H1 (cell line): ENCODE measurements at regions of chr22 and their contacts with region 1.

Region 1: DNA sequence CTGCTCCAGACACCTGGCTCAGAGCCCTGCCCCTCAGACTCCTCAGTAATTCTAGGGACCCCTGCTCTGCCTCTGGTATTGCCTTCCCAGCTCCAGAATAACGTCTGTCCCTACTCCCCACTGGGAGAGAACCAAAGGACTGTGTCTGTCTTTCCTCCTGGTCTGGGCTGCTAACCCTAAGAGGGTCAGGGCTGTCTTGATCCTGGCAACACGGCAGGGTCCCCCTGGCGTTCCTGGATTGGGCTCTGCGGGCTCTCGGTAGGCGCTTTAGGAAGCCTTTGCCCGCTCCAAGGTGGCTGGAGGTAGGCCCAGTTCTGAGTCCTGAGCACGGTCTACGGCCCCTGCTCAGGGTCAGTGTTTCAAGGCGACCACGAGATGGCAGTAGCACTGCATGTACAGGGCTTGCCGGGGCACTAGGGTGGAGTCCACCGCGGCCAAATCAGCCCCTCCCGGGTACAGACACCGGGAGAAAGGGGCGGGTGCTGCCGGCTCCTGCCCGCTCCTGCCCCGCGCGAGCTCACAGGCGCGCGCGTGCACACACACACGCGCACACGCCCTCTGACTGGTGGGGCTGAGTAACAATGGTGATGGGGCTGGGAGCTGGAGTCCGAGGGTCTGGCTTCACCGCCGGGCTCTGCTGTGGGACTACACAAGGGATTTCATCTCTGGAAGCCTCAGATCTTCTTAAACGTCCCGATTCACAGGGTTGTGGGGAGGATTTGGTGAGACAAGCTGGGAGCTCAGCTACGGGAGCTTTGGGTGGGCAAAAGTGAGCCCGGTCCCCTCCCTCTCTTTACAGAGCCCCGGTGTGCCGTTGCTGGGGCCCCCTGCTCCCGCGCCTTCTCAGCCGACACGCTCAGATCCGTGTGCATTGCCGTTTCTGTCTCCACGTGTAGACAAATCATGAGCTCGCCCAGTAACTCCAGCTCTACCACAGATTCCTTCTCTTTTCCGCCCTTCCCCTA is 30.1 kb upstream of the HMOX1 start:
- DNase-seq: peak; percentile 75 to 94
- H3K4me3 ChIP-seq: peak overlapping the region; percentile 38 to 79 (median 70)
- H3K27ac ChIP-seq: no peak overlapping the region
- H3K4me1 ChIP-seq: peaks cover 0 to 12% (median 5%) of the 10 kb centered on the region in 4 experiments; a peak in 5 of 7 replicates
- H3K27me3 ChIP-seq: peaks cover 0 to 4% (median 0%) of the 10 kb centered on the region in 4 experiments; a peak in 4 of 7 replicates
- CTCF ChIP-seq: peak; percentile 87 to 93 (median 89)
- EP300 ChIP-seq: no peak
- POLR2A ChIP-seq: no peak
- RAD21 ChIP-seq: peak; percentile 97 to 98

Region 2: GRCh38 chr22:34960005-34960404 is 390.8 kb before region 1 on chr22:
- CTCF ChIA-PET with region 1: no interaction called
- POLR2A ChIA-PET with region 1: no interaction called
- DNase-seq: no peak
- H3K4me3 ChIP-seq: no peak overlapping the region
- H3K27ac ChIP-seq: no peak overlapping the region
- H3K4me1 ChIP-seq: no peaks in the 10 kb centered on the region
- H3K27me3 ChIP-seq: no peaks in the 10 kb centered on the region
- CTCF ChIP-seq: no peak
- EP300 ChIP-seq: no peak
- POLR2A ChIP-seq: no peak
- RAD21 ChIP-seq: no peak

Region 3: DNA sequence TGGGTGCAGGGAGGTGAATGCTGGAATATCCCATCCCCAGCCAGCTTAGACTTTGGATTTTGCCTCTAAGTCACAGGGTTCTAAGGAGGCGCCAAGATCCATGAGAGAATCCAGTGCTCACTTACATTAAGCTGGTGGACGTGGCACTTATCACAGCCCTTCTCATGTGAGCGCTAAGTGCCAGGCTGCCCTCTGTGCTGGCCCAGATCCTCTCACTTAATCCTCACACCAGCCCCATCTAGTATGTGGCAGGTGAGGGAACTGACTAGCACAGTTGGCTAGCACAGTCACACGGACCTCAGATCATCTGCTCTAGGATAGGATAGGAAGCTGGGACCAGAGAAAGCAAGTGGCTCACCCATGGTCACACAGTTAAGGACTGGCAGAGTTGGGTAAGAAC is 33.7 kb after region 1 on chr22:
- CTCF ChIA-PET with region 1: interaction called, 39 read pairs
- POLR2A ChIA-PET with region 1: interaction called, 4 read pairs
- DNase-seq: no peak
- H3K4me3 ChIP-seq: no peak overlapping the region
- H3K27ac ChIP-seq: no peak overlapping the region
- H3K4me1 ChIP-seq: peaks cover 3 to 13% (median 10%) of the 10 kb centered on the region in 4 experiments
- H3K27me3 ChIP-seq: no peaks in the 10 kb centered on the region; a peak in 1 of 7 replicates
- CTCF ChIP-seq: no peak
- EP300 ChIP-seq: no peak
- POLR2A ChIP-seq: no peak
- RAD21 ChIP-seq: no peak

Region 4: GRCh38 chr22:35409783-35410662 is 59.2 kb after region 1 on chr22:
- CTCF ChIA-PET with region 1: interaction called, 31 read pairs
- POLR2A ChIA-PET with region 1: interaction called, 36 read pairs
- DNase-seq: no peak
- H3K4me3 ChIP-seq: no peak overlapping the region
- H3K27ac ChIP-seq: no peak overlapping the region
- H3K4me1 ChIP-seq: no peaks in the 10 kb centered on the region
- H3K27me3 ChIP-seq: no peaks in the 10 kb centered on the region
- CTCF ChIP-seq: no peak
- EP300 ChIP-seq: no peak
- POLR2A ChIP-seq: no peak; a peak in 1 of 3 replicates
- RAD21 ChIP-seq: no peak

Region 5: GRCh38 chr22:35539910-35540594 is 189.2 kb after region 1 on chr22:
- CTCF ChIA-PET with region 1: interaction called, 10 read pairs
- POLR2A ChIA-PET with region 1: no interaction called
- DNase-seq: peak in 1 of 2 experiments; percentile 74
- H3K4me3 ChIP-seq: peak overlapping the region; percentile 44 to 73 (median 48)
- H3K27ac ChIP-seq: no peak overlapping the region
- H3K4me1 ChIP-seq: peaks cover 4 to 31% (median 17%) of the 10 kb centered on the region in 4 experiments
- H3K27me3 ChIP-seq: peaks cover 0 to 31% (median 19%) of the 10 kb centered on the region in 4 experiments; a peak in 5 of 7 replicates
- CTCF ChIP-seq: no peak
- EP300 ChIP-seq: no peak
- POLR2A ChIP-seq: no peak
- RAD21 ChIP-seq: no peak